Lower leg skin (tissue), 4 donors: ENCODE measurements at regions of chr3 and their contacts with region 1.

Region 1: DNA sequence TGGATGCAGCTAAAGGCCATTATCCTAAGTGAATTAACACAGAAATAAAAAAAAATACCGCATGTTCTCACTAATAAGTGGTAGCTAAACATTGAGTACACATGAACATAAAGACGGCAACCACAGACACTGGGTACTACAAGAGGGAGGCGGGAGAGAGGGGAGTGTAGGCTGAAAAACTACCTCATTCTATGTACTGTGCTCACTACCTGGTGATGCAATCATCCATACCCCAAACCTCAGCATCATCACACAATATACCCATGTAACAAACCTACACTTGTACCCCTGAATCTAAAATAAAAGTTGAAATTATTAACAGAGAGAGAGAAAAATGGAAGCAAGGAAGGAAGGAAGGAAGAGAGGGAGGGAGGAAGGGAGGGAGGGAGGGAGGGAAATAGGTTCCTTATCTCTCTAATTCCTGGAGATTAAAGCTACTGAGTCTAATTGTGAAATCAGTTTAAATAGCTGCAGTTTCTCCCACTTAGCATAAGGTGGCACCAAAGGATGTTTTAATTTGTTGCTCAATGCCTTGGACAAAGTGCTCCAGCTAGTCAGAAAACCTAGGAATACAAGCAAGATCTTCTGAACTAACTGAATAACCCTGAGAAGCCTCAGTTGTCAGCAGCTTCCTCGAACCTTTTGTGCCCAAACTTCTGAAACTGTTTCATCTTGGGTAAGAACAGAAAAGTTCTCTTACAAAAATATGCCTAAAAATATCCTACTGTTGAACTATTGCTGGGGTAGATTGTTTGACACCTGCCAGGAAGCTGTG is 79.4 kb upstream of the ATP11B start:
- DNase-seq: no peak
- H3K4me3 ChIP-seq: no peak overlapping the region
- CTCF ChIP-seq: no peak
- POLR2A ChIP-seq: no peak

Region 2: DNA sequence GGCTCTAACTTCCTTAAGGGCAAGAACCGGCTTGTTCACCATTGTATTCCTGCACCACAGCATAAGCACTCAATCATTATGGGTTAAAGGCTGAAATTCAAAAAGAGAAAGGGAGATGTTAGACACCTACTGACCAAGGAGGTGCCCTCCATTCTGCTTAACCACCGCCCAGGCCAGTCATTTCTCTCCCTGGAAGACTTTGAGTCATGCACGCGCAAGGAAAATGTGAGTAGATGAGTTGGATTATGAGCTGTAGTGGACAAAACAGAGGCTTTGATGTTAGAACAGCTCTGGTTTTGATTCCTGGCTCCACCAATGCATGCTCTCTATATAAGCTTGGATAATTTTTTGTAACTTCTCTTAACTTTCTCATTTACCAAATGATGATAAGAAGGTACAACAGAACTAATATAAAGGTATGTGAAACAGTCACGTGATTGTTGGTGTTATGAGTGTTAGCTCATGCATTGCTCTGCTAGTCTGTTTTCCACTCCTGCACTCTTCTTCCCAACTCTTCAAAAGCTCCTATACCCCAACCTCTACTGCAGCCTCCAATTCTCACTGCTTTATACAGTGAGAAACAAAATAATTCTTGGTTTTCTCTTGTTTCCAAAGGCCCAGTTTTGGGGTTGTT is 69.0 kb before region 1 on chr3:
- intact Hi-C with region 1: no loop called
- DNase-seq: no peak
- H3K4me3 ChIP-seq: no peak overlapping the region
- CTCF ChIP-seq: no peak
- POLR2A ChIP-seq: no peak

Region 3: DNA sequence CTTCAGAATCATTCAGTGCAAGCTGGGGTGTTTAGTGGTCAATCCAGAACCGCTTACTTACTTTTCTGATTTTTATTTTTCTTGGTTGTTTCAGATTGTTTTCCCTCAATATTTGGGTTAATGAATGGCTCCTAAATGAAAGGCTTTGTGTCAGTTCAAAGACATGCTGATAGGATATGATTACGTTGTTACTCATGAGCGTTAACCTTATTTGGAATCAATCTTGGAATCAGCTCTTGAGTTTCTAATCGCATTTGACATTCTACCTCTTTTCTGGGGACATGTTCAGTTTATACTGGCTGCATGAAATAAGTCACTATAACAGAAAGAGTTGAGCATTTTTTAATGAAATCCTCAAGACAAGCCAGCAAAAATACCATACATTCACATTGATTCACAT is 129.5 kb after region 1 on chr3:
- intact Hi-C with region 1: loop called (anchors 10 kb)
- DNase-seq: no peak
- H3K4me3 ChIP-seq: no peak overlapping the region
- CTCF ChIP-seq: no peak
- POLR2A ChIP-seq: no peak